Transverse colon (tissue), 4 donors: ENCODE measurements at regions of chr9 and their contacts with region 1.

Region 1: DNA sequence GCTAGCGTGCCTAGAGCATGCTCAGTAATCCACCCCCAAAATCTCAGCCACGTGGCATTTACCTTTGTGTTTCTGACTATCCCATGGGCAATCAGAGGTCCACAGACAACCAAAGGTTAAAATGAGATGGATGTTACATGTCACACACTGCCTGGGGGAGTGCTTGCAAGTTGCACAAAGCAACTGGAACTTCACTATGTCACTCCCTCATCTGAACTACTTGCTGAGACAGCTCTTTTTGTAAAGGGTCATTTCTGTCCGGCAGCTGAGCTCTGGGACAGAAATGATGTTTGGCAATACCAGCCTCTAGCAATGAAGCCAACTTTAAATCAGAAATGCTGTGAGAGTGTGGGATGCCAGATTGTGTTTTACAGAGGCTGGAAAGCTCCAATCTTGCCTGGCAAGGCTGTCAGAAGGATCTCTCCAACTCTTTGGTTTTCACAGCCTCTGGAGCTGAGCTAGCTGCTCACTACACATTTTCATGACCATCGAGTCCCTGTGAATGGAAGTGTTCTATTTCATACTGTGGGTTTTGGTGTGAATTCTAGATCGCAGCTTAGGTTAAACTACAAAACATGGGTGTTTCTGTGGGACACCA is 66.3 kb upstream of the TMEM215 start:
- DNase-seq: no peak
- H3K4me3 ChIP-seq: no peak overlapping the region
- H3K27ac ChIP-seq: no peak overlapping the region
- H3K4me1 ChIP-seq: no peaks in the 10 kb centered on the region
- H3K27me3 ChIP-seq: no peaks in the 10 kb centered on the region
- CTCF ChIP-seq: no peak
- EP300 ChIP-seq: no peak
- POLR2A ChIP-seq: no peak

Region 2: GRCh38 chr9:31023847-31024246 is 1693.2 kb before region 1 on chr9:
- in situ Hi-C with region 1: no loop called
- intact Hi-C with region 1: loop called (anchors 5 kb)
- DNase-seq: no peak
- H3K4me3 ChIP-seq: no peak overlapping the region
- H3K27ac ChIP-seq: no peak overlapping the region
- H3K4me1 ChIP-seq: no peaks in the 10 kb centered on the region
- H3K27me3 ChIP-seq: no peaks in the 10 kb centered on the region
- CTCF ChIP-seq: no peak
- EP300 ChIP-seq: no peak
- POLR2A ChIP-seq: no peak